PC-3 (cell line): ENCODE measurements at regions of chr1 and their contacts with region 1.

Region 1: GRCh38 chr1:114670083-114671010 is 498 bp upstream of the DENND2C start:
- DNase-seq: peak; percentile 93
- ATAC-seq: peak; percentile 92
- H3K4me3 ChIP-seq: peak overlapping the region; percentile 85
- H3K27ac ChIP-seq: peak overlapping the region; percentile 80
- H3K4me1 ChIP-seq: peaks cover 12% of the 10 kb centered on the region
- H3K27me3 ChIP-seq: 0 out of 2 replicates have a peak, but pooled peaks cover 6% of the 10 kb centered on the region
- CTCF ChIP-seq: no peak

Region 2: GRCh38 chr1:114581335-114582287 is 88.7 kb before region 1 on chr1 and contains the start of gene BCAS2:
- CTCF ChIA-PET with region 1: no interaction called
- POLR2A ChIA-PET with region 1: no interaction called
- intact Hi-C with region 1: loop called (anchors 1 kb)
- DNase-seq: peak; percentile 98
- ATAC-seq: peak; percentile 99
- H3K4me3 ChIP-seq: peak within 1 kb of the TSS; percentile 84
- H3K27ac ChIP-seq: peak within 1 kb of the TSS; percentile 61
- H3K4me1 ChIP-seq: peaks cover 12% of the 10 kb centered on the region
- H3K27me3 ChIP-seq: no peaks in the 10 kb centered on the region
- CTCF ChIP-seq: no peak
- total RNA-seq, gene BCAS2: 57.7 and 70.1 TPM in 2 replicates

Region 3: DNA sequence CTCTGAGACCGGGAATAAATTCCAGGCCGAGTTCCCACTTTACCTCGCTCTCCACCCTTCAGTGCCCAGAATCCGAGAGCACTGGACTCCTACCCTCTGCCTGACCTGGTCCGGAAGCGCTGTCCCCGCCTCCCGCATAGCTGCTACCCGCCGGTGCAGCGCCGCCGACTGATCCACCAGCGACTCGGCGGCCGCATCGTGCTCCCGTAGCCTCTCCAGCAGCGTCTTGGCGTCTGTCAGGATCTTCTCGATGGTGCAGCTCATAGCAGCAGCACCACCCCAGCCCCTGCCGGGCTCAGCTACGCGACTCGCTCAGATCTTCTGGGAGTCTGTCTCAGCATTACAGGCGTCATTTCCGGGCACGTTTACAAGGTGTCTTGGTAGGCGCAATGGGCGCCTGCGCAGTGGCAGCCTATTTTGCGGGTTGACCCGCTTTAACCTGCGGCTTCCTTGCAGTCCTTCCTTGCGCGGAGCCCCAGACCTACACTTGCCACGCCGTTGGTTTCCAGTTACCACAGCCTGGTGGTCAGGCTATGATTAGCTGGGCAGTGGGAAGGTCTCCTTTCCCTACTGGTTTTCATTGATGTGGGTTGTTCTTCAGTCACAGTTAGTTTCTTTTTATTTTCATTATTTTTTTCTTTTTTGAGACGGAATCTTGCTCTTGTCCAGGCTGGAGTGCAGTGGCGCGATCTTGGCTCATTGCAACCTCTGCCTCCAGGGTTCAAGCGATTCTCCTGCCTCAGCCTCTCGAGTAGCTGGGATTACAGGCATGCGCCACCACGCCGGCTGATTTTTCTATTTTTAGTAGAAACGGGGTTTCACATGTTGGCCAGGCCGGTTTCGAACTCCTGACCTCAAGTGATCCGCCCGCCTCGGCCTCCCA is 110.2 kb after region 1 on chr1 and contains the start of gene SIKE1:
- CTCF ChIA-PET with region 1: no interaction called
- POLR2A ChIA-PET with region 1: no interaction called
- intact Hi-C with region 1: no loop called
- DNase-seq: peak; percentile 95
- ATAC-seq: peak; percentile 99
- H3K4me3 ChIP-seq: peak within 1 kb of the TSS; percentile 87
- H3K27ac ChIP-seq: peak within 1 kb of the TSS; percentile 60
- H3K4me1 ChIP-seq: 0 out of 2 replicates have a peak, but pooled peaks cover 4% of the 10 kb centered on the region
- H3K27me3 ChIP-seq: no peaks in the 10 kb centered on the region
- CTCF ChIP-seq: no peak
- total RNA-seq, gene SIKE1: 104 and 136 TPM in 2 replicates